ENCODE measurements at regions of chr14 and their contacts with region 1.

Region 1: GRCh38 chr14:35121887-35122695 is at the starts of genes PPP2R3C and PRORP:
- DNase-seq: peak; percentile 93
- ATAC-seq: peak; percentile 87
- H3K4me3 Mint-ChIP-seq: peak within 1 kb of the TSS; percentile 87
- H3K27ac Mint-ChIP-seq: peak within 1 kb of the TSS; percentile 99
- H3K4me1 Mint-ChIP-seq: peaks cover 64% of the 10 kb centered on the region
- H3K27me3 Mint-ChIP-seq: no peaks in the 10 kb centered on the region
- total RNA-seq, gene PPP2R3C: 43.8 to 53.5 TPM
- total RNA-seq, gene PRORP: 37.3 to 51.1 TPM

Region 2: GRCh38 chr14:34629657-34630529 is 492.2 kb before region 1 on chr14 and contains the start of gene SNX6:
- CTCF ChIA-PET with region 1: no interaction called
- POLR2A ChIA-PET with region 1: no interaction called
- intact Hi-C with region 1: loop called in 1 of 2 experiments (anchors 1 kb)
- DNase-seq: peak; percentile 93
- ATAC-seq: peak; percentile 98
- H3K4me3 Mint-ChIP-seq: peak within 1 kb of the TSS; percentile 97
- H3K27ac Mint-ChIP-seq: peak within 1 kb of the TSS; percentile 98
- H3K4me1 Mint-ChIP-seq: peaks cover 25% of the 10 kb centered on the region
- H3K27me3 Mint-ChIP-seq: no peaks in the 10 kb centered on the region
- total RNA-seq, gene SNX6: 77.3 to 78.7 TPM

Region 3: GRCh38 chr14:34931206-34931605 is 190.9 kb before region 1 on chr14:
- CTCF ChIA-PET with region 1: no interaction called
- POLR2A ChIA-PET with region 1: no interaction called
- intact Hi-C with region 1: loop called in 1 of 2 experiments (anchors 2 kb)
- DNase-seq: peak; percentile 25
- ATAC-seq: peak; percentile 72
- H3K4me3 Mint-ChIP-seq: peak overlapping the region; percentile 47
- H3K27ac Mint-ChIP-seq: peak overlapping the region; percentile 100
- H3K4me1 Mint-ChIP-seq: peaks cover 44% of the 10 kb centered on the region
- H3K27me3 Mint-ChIP-seq: no peaks in the 10 kb centered on the region

Region 4: DNA sequence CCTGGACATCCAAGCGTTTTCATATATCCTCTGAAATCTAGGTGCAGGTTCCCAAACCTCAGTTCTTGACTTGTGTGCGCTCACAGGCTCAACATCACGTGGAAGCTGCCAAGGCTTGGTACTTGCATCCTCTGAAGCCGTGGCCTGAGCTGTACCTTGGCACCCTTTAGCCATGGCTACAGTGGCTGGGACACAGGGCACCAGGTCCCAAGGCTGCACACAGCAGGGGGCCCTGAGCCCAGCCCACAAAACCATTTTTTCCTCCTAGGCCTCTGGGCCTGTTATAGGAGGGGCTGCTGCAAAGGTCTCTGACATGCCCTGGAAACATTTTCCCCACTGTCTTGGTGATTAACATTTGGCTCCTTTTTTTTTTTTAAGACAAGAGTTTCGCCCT is 87.7 kb before region 1 on chr14:
- CTCF ChIA-PET with region 1: no interaction called
- POLR2A ChIA-PET with region 1: no interaction called
- intact Hi-C with region 1: no loop called
- DNase-seq: no peak
- ATAC-seq: no peak
- H3K4me3 Mint-ChIP-seq: no peak overlapping the region
- H3K27ac Mint-ChIP-seq: no peak overlapping the region
- H3K4me1 Mint-ChIP-seq: no peaks in the 10 kb centered on the region
- H3K27me3 Mint-ChIP-seq: no peaks in the 10 kb centered on the region

Region 5: DNA sequence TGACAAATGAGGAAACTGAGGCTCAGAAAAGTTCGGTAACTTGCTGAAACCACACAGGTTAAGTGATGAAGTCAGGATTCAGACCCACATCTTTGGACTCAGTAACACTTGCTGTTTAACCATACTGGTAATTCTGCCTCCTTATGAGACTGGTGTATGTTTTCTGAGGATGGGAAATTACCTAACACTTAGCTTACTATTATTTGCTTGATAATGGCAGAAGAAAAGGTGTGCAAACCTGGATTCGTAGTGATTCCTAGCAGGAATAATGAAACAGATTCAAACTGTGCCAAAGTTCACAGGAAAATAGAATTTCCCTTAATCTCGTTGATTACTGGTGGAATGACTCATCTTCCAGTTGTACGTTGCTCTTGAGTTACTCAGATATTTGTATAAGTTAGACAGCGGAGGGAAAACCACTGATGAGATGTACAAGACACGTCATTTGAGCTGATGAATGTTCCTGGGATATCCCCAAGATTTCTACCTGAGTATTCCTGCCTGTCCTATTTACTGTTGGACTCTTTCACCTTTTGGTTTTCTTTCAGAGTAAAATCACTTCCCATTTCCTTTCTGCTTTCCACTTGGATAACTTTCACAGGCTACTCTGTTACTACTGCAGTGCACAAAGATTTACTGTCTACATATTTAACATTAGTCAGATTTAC is 37.8 kb after region 1 on chr14:
- CTCF ChIA-PET with region 1: interaction called, 3 read pairs
- POLR2A ChIA-PET with region 1: no interaction called
- intact Hi-C with region 1: loop called in 1 of 2 experiments (anchors 1 kb)
- DNase-seq: no peak
- ATAC-seq: peak; percentile 85
- H3K4me3 Mint-ChIP-seq: peak overlapping the region; percentile 4
- H3K27ac Mint-ChIP-seq: peak overlapping the region; percentile 65
- H3K4me1 Mint-ChIP-seq: peaks cover 53% of the 10 kb centered on the region
- H3K27me3 Mint-ChIP-seq: no peaks in the 10 kb centered on the region

Region 6: DNA sequence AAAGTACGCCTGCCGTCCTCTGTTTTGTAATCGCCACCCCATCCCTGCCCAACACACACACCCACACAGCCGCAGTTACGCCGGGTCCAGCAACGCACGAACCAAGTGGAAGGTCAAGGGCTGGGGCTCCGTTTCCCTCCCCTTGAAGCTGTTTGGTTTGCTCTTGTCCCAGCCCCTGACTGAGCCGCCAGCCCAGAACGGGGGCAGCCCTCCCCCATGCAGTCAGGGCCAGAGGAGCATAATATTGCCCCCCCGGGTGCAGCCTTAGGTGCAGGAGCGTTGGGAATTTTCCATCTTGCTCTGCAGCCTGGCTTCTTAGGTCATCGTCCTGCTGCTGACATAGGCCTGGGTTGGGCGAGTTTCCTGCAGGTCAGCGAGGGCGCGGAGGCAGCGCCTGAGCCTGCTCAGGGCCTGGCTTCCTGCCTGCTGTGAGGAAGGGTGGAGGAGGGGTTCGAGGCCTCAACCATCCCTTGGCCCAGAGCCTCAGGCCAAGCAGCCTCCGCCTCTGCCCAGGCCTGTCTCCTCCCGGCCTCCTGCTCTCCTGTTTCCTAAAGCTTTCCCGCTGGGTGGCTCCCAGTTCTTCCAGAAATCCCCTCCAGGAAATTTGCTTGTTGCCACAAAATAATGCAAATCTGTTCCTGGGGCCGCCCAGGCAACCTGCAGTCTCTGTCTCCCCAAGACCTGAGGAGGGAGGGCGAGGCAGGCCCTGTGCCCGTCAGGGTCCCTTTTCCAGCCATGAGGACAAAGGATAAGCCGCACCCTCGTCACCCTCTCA is 214.6 kb after region 1 on chr14:
- CTCF ChIA-PET with region 1: no interaction called
- POLR2A ChIA-PET with region 1: no interaction called
- intact Hi-C with region 1: no loop called
- DNase-seq: no peak
- ATAC-seq: no peak
- H3K4me3 Mint-ChIP-seq: no peak overlapping the region
- H3K27ac Mint-ChIP-seq: no peak overlapping the region
- H3K4me1 Mint-ChIP-seq: peaks cover 32% of the 10 kb centered on the region
- H3K27me3 Mint-ChIP-seq: no peaks in the 10 kb centered on the region

Region 7: GRCh38 chr14:35808076-35808652 is 686.1 kb after region 1 on chr14:
- CTCF ChIA-PET with region 1: no interaction called
- POLR2A ChIA-PET with region 1: no interaction called
- intact Hi-C with region 1: loop called in 1 of 2 experiments (anchors 5 kb)
- DNase-seq: peak; percentile 54
- ATAC-seq: no peak
- H3K4me3 Mint-ChIP-seq: peak overlapping the region; percentile 95
- H3K27ac Mint-ChIP-seq: peak overlapping the region; percentile 97
- H3K4me1 Mint-ChIP-seq: peaks cover 24% of the 10 kb centered on the region
- H3K27me3 Mint-ChIP-seq: no peaks in the 10 kb centered on the region

Measured in activated CD4-positive, alpha-beta T cell treated with anti-CD3 and anti-CD28 coated beads for 36 hours (primary cell).